ENCODE measurements at regions of chr2 and their contacts with region 1.

Region 1: DNA sequence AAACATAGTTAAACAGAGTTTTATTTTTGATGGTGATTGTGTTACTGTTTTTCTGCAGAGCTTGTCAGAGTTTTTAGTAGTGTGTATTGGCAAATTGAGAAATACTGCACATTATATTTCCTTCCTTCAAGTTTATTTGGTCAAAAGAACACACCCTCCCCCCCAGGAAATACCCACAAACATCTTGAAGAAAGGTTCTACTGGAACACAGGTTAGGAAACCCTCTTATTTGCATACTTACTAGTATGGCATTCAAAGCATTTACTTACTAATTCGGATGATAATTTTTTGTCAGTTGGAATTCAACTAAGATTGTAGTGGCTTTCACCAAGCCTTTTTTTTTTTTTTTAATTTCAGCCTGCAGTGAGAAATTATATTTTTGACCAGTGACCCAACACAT is 9.1 kb downstream of the CAB39 start:
- DNase-seq: no peak
- H3K4me3 ChIP-seq: no peak overlapping the region
- H3K27ac ChIP-seq: no peak overlapping the region
- H3K4me1 ChIP-seq: peaks cover 27 to 54% (median 33%) of the 10 kb centered on the region in 4 donors
- H3K27me3 ChIP-seq: no peaks in the 10 kb centered on the region
- CTCF ChIP-seq: no peak
- EP300 ChIP-seq: no peak
- POLR2A ChIP-seq: no peak

Region 2: GRCh38 chr2:230541934-230542380 is 179.8 kb before region 1 on chr2:
- in situ Hi-C with region 1: no loop called
- intact Hi-C with region 1: no loop called
- DNase-seq: no peak
- H3K4me3 ChIP-seq: no peak overlapping the region
- H3K27ac ChIP-seq: no peak overlapping the region
- H3K4me1 ChIP-seq: no peaks in the 10 kb centered on the region
- H3K27me3 ChIP-seq: no peaks in the 10 kb centered on the region
- CTCF ChIP-seq: no peak
- EP300 ChIP-seq: no peak
- POLR2A ChIP-seq: no peak

Region 3: DNA sequence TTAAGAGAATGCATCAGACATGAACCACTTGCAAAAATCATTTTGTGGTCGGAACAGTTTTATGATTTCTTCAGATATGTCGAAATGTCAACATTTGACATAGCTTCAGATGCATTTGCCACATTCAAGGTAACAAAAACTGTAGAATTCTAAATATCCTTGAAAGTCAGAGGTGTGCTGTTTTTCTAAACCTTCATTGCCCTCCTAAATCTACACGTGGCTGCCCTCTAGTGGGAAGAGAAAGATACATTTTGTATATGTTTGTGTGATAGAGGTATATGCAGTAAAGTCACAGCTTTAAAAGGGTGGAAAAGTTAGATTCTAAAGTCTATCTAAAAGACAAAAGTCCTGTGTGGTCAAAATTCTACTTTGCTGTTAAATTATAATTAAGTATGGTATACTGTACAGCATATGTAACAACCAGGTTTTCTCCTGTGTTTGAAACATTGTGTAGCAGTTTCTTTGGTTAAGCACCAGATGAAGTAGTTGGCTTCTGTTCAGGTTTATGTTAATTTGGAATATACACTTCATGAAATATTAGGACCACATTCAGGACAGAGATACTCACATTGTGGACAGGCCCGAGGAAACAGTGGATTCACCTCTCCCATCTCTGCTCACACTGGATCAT is 77.2 kb after region 1 on chr2:
- in situ Hi-C with region 1: loop called in 3 of 4 experiments (anchors 10 to 25 kb)
- intact Hi-C with region 1: no loop called
- DNase-seq: no peak
- H3K4me3 ChIP-seq: no peak overlapping the region
- H3K27ac ChIP-seq: peak overlapping the region in 1 of 4 donors; percentile 19
- H3K4me1 ChIP-seq: peaks cover 30 to 44% (median 36%) of the 10 kb centered on the region in 4 donors
- H3K27me3 ChIP-seq: no peaks in the 10 kb centered on the region
- CTCF ChIP-seq: peak; percentile 58 to 70 (median 65)
- EP300 ChIP-seq: no peak
- POLR2A ChIP-seq: no peak

Region 4: DNA sequence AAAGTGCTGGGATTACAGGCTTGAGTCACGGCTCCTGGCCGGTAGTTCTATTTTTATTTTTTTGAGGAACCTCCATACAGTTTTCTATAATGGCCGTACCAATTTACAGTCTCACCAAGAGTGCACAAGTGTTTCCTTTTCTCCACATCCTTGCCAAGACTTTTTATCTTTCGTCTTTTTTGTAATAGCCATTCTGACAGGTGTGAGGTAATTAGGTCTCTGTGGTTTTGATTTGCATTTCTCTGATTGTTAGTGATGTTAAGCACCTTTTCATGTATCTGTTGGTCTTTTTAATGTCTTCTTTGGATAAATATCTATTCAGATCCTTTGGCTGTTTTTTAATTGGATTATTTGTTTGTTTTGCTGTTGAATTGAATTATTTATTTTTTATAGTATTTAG is 486.0 kb after region 1 on chr2:
- in situ Hi-C with region 1: no loop called
- intact Hi-C with region 1: loop called (anchors 5 kb)
- DNase-seq: no peak
- H3K4me3 ChIP-seq: no peak overlapping the region
- H3K27ac ChIP-seq: peak overlapping the region in 1 of 4 donors; percentile 5
- H3K4me1 ChIP-seq: no peaks in the 10 kb centered on the region
- H3K27me3 ChIP-seq: no peaks in the 10 kb centered on the region
- CTCF ChIP-seq: no peak
- EP300 ChIP-seq: no peak
- POLR2A ChIP-seq: no peak

Measured in transverse colon (tissue), 4 donors.